ENCODE measurements at regions of chr2 and their contacts with region 1.

Region 1: DNA sequence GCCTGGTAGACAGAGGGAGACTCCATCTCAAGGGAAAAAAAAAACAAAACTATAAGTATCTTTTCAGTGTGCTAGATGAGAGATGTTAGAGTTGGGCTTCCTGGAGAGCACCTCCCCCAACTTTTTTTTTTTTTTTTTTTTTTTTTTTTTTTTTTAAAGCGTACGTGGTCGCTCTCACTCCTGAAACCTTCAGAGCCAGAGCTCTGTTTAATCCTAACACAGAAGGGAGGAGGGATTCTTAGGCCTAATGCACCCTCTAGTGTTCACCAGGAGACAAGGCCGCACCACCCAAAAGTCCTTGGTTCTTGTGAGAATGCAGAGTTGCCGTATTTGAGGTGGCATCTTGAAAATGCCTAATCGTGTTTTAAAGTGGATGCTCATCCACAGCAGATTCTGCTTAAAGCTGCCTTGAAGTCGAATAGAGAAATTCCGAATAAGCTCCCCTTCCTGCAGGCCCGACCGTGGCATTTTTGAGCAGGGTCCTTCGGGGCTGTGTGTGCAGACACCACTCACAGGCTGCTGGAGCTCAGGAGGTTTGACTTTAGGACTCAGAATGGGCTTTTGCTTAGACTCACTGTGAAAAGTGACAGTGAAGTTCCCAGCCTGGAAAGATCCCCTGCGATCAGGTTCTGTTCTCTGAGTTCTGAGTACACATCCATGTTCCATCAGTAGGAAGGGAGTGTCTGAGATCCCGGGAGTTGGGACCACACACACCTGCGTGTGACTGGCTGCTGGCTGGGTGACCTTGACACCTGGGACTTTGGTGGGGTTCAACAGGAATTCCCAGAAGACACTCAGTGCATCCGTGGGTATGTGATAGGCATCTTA is 252.6 kb downstream of the AGAP1 start:
- DNase-seq: no peak
- H3K4me3 ChIP-seq: no peak overlapping the region
- H3K27ac ChIP-seq: peak overlapping the region in 1 of 4 donors; percentile 36
- H3K4me1 ChIP-seq: peaks cover 0 to 29% (median 9%) of the 10 kb centered on the region in 3 donors
- H3K27me3 ChIP-seq: no peaks in the 10 kb centered on the region
- CTCF ChIP-seq: peak; percentile 41 to 84 (median 78)
- POLR2A ChIP-seq: no peak

Region 2: GRCh38 chr2:235135990-235136561 is 610.4 kb before region 1 on chr2:
- intact Hi-C with region 1: loop called (anchors 10 kb)
- DNase-seq: no peak
- H3K4me3 ChIP-seq: no peak overlapping the region
- H3K27ac ChIP-seq: no peak overlapping the region
- H3K4me1 ChIP-seq: no peaks in the 10 kb centered on the region
- H3K27me3 ChIP-seq: peaks cover 0 to 7% (median 0%) of the 10 kb centered on the region in 4 donors
- CTCF ChIP-seq: peak; percentile 33 to 83 (median 75)
- POLR2A ChIP-seq: no peak

Region 3: DNA sequence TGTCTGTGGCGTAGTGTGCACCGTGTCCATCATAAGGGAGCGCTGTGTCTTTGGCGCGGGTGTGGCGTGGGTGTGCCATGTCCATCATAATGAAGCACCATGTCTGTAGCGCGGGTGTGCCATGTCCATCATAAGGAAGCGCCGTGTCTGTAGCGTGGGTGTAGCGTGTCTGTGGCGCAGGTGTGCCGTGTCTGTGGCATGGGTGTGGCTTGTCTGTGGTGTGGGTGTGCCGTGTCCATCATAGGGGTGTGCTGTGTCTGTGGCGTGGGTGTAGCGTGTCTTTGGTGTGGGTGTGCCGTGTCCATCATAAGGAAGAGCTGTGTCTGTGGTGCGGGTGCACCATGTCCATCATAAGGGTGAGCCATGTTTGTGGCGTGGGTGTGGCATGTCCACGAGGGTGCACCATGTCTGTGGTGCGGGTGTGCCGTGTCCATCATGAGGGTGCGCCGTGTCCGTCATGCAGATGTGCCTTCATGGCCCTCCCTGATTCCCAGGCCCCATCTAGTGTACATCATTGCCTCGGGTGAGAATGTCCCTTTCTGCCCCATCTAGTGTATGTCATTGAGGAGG is 146.7 kb after region 1 on chr2:
- intact Hi-C with region 1: no loop called
- DNase-seq: no peak
- H3K4me3 ChIP-seq: no peak overlapping the region
- H3K27ac ChIP-seq: no peak overlapping the region
- H3K4me1 ChIP-seq: no peaks in the 10 kb centered on the region
- H3K27me3 ChIP-seq: no peaks in the 10 kb centered on the region
- CTCF ChIP-seq: no peak
- POLR2A ChIP-seq: no peak

Region 4: DNA sequence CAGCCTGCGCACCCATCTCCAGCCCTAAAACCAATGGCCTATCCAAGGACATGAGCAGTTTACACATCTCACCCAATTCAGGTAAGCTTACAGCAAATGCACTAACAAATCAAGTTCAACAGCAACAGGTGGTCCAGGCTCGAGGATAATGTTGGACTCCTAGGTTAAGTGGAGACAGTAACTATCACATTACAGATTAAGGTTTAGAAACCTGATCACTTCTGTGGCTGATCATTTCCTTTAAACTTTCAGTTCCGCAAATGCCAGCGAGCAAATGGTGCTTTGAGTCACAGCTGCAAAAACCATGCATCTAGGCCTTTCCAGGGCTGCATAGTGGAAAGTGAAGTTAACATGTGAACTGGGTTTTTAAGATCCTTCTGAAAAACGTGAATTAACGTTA is 162.4 kb after region 1 on chr2:
- intact Hi-C with region 1: no loop called
- DNase-seq: no peak
- H3K4me3 ChIP-seq: no peak overlapping the region
- H3K27ac ChIP-seq: no peak overlapping the region
- H3K4me1 ChIP-seq: no peaks in the 10 kb centered on the region
- H3K27me3 ChIP-seq: no peaks in the 10 kb centered on the region
- CTCF ChIP-seq: no peak
- POLR2A ChIP-seq: no peak